SK-N-SH (cell line): ENCODE measurements at regions of chrX and their contacts with region 1.

Region 1: DNA sequence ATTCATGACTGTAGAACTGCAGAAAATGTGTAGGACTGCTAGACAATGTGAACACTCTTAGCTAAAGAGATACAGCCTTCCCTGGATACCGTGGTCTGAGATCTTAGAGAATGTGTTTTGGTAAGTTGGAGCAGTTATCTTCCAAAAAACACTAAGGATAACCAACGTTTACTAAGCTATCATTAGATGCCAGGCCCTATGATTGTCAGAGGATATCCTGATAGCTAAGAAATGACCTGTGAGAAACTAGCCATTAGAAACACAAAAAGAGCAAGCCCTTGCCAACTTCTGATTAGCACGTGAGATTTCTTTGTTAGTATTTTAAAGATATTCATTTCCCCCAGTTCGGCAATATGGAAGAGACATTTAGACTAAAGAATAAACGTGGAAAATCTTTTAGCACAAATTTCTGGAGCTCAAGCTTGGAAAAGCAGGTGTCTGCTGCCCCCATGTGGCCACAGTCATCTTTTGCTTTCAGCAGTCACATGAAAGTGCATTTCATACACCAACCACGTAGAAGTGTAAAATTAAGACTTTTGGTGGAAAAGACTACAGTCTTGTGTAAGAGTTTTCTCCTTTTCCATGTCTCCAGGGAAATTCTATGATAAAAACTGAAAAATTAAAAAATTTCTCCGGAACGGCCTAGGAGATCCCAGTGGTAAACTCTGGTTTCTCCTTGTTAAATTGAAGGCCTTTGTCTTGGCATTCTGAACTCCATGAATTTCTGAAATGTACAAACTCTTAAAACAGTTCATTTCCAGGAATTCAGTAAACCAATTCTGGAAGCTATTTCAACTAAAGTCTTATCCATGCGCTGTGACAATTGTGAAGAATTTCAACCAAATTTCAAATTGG is 136.4 kb downstream of the ZNF674 start:
- DNase-seq: peak; percentile 57
- H3K4me3 ChIP-seq: no peak overlapping the region
- H3K27ac ChIP-seq: peak overlapping the region in 1 of 2 experiments; percentile 14; a peak in 1 of 4 replicates
- H3K4me1 ChIP-seq: 0 out of 4 replicates have a peak, but pooled peaks cover 0 to 14% of the 10 kb centered on the region in 2 experiments
- H3K27me3 ChIP-seq: 0 out of 2 replicates have a peak, but pooled peaks cover 8% of the 10 kb centered on the region
- CTCF ChIP-seq: peak; percentile 98
- EP300 ChIP-seq: no peak
- RAD21 ChIP-seq: peak; percentile 90

Region 2: DNA sequence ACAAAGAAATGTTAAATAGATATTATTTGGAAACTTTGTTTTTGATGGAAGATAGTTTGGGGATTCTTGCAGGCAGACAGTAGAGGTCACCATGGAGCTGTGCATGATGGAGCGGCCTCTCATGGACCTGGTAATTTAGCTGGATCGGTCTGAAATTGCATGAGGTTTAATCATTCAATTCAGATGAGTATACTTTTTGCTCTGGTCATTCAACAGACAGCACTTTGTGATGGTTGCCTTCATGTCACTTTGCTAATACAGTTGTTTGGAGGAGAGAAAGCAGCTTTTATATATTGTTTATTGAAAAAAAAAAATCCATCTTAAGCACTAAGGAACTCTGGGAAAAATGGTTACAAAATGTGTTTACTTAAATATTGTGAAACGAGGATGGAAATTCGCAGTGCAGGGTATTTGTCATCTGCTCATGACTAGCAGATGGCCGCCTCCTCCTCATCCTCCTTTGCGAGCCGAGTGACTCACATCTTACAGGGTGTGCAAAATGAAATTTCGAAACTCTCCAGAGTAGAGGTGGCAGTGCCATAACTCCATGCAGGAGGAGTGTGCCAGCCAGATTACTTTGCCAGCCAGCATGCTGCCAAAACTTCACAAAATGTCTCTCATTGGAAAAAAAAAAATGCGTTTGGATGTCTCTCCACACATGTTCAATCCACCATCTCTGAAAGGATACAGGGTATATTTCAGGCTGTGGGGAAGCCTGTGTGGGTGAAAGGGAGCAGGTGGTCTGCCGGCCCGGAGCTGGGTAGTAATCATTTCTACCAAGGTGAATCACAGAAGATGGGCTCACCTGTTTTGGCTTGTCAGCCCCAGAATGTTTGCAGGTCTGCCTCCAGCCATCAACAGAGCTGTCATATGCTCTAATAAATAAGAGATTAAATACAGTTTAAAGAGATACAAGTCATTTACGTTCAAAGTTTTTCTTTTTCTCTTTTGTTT is 893.2 kb before region 1 on chrX:
- CTCF ChIA-PET with region 1: interaction called, 16 read pairs
- POLR2A ChIA-PET with region 1: no interaction called
- DNase-seq: peak; percentile 20
- H3K4me3 ChIP-seq: no peak overlapping the region
- H3K27ac ChIP-seq: peak overlapping the region; percentile 85 to 94
- H3K4me1 ChIP-seq: peaks cover 0 to 50% of the 10 kb centered on the region in 2 experiments; a peak in 3 of 4 replicates
- H3K27me3 ChIP-seq: no peaks in the 10 kb centered on the region
- CTCF ChIP-seq: peak; percentile 94
- EP300 ChIP-seq: peak in 1 of 2 experiments; percentile 91; a peak in 2 of 4 replicates
- RAD21 ChIP-seq: peak; percentile 75

Region 3: GRCh38 chrX:46340696-46341095 is 68.1 kb before region 1 on chrX:
- CTCF ChIA-PET with region 1: no interaction called
- POLR2A ChIA-PET with region 1: no interaction called
- DNase-seq: no peak
- H3K4me3 ChIP-seq: no peak overlapping the region
- H3K27ac ChIP-seq: no peak overlapping the region
- H3K4me1 ChIP-seq: no peaks in the 10 kb centered on the region
- H3K27me3 ChIP-seq: no peaks in the 10 kb centered on the region
- CTCF ChIP-seq: no peak
- EP300 ChIP-seq: no peak
- RAD21 ChIP-seq: no peak

Region 4: GRCh38 chrX:46386510-46386909 is 22.3 kb before region 1 on chrX:
- CTCF ChIA-PET with region 1: interaction called, 12 read pairs
- POLR2A ChIA-PET with region 1: no interaction called
- DNase-seq: no peak
- H3K4me3 ChIP-seq: no peak overlapping the region
- H3K27ac ChIP-seq: no peak overlapping the region
- H3K4me1 ChIP-seq: no peaks in the 10 kb centered on the region
- H3K27me3 ChIP-seq: no peaks in the 10 kb centered on the region; the same call in 1 of the 2 replicates
- CTCF ChIP-seq: peak; percentile 57
- EP300 ChIP-seq: no peak
- RAD21 ChIP-seq: peak; percentile 15; the same call in 1 of the 2 replicates

Region 5: GRCh38 chrX:46628460-46629371 is 219.9 kb after region 1 on chrX:
- CTCF ChIA-PET with region 1: no interaction called
- POLR2A ChIA-PET with region 1: no interaction called
- DNase-seq: no peak
- H3K4me3 ChIP-seq: no peak overlapping the region
- H3K27ac ChIP-seq: no peak overlapping the region
- H3K4me1 ChIP-seq: no peaks in the 10 kb centered on the region
- H3K27me3 ChIP-seq: no peaks in the 10 kb centered on the region; the same call in 1 of the 2 replicates
- CTCF ChIP-seq: no peak
- EP300 ChIP-seq: no peak
- RAD21 ChIP-seq: no peak